Activated CD8-positive, alpha-beta T cell treated with anti-CD3 and anti-CD28 coated beads for 36 hours (primary cell): ENCODE measurements at regions of chr16 and their contacts with region 1.

Region 1: GRCh38 chr16:30956601-30957455 is 726 bp upstream of the SETD1A start:
- DNase-seq: peak; percentile 95
- ATAC-seq: peak; percentile 83
- H3K4me3 Mint-ChIP-seq: peak overlapping the region; percentile 89
- H3K27ac Mint-ChIP-seq: peak overlapping the region; percentile 99
- H3K4me1 Mint-ChIP-seq: peaks cover 37% of the 10 kb centered on the region
- H3K27me3 Mint-ChIP-seq: no peaks in the 10 kb centered on the region
- CTCF ChIP-seq: no peak

Region 2: GRCh38 chr16:30882429-30883310 is 74.2 kb before region 1 on chr16:
- CTCF ChIA-PET with region 1: no interaction called
- POLR2A ChIA-PET with region 1: no interaction called
- intact Hi-C with region 1: no loop called
- DNase-seq: no peak
- ATAC-seq: peak; percentile 54
- H3K4me3 Mint-ChIP-seq: no peak overlapping the region
- H3K27ac Mint-ChIP-seq: peak overlapping the region; percentile 86
- H3K4me1 Mint-ChIP-seq: peaks cover 32% of the 10 kb centered on the region
- H3K27me3 Mint-ChIP-seq: no peaks in the 10 kb centered on the region
- CTCF ChIP-seq: no peak

Region 3: DNA sequence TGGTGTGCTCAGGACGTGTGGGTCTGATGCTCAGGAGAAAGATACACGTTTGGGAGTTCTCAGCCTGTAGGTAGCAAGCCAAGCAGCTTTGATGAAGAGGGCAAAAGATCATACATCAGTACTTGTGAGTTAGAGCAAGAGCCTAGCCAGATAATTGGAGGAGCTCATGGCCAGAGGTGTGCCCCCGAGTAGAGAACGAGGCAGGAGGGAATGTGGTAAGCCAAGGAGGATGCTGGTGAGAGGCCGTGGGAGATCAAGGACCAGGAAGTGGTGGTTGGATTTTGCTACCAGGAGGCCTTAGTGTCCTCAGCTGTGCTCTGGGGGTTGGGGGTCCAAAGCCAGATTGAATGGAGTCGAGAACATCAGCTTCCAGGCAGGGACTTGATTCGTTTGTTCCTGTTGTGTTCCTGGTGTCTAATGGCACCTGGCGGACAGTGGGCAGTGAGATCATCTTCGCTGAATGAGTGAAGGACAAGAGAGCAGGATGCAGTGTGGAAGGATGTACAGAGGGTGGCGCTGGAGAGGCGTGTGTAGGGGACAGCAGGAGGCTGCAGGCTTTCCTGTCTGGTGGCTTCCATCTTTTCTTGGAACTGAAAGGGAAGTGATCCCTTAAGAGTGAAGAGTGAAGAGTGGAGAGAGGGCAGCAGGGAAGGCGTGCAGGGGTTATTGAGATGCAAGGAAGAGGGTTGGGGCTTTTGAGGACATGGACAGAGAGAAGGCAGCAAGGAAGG is 21.8 kb before region 1 on chr16:
- CTCF ChIA-PET with region 1: interaction called, 50 read pairs
- POLR2A ChIA-PET with region 1: no interaction called
- intact Hi-C with region 1: no loop called
- DNase-seq: peak; percentile 72
- ATAC-seq: peak; percentile 97
- H3K4me3 Mint-ChIP-seq: no peak overlapping the region
- H3K27ac Mint-ChIP-seq: peak overlapping the region; percentile 29
- H3K4me1 Mint-ChIP-seq: peaks cover 16% of the 10 kb centered on the region
- H3K27me3 Mint-ChIP-seq: no peaks in the 10 kb centered on the region
- CTCF ChIP-seq: peak; percentile 69

Region 4: DNA sequence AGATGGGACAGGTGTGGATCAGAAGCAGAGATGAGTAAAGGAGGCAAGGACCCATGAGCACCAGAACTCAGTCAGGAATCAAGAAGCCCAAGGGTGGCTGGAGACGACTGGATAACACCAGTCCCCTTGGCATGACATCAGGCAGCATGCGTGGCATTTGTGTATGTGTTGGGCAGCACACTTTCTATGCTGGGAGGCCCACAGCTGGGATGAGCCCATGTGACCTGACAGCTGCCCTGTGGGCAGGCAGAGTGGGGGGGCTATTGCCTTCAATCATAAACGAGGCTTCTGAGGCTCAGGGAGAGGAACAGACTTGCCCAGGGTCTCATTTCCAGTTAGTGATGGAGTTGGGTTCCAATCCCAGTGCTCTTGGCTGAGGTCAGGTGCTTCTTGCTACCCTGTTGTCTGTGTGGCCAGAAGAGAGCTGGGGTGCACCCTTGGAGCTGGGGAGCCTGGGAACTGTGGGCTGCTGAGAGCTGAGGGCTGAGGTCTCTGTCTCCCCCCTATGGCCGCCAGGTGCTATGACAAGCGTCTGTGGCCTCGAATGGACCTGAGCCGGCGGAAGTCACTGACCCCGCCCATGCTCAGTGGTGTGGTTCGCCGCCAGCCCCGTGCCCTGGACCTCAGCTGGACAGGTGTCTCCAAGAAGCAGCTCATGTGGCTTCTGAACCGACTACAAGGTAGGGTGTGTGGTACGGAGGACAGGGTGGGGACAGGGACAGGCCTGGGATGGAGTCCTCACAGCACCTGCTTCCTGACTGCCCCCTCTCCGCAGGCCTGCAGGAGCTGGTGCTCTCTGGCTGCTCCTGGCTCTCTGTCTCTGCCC is 15.0 kb before region 1 on chr16:
- CTCF ChIA-PET with region 1: interaction called, 50 read pairs
- POLR2A ChIA-PET with region 1: interaction called, 4 read pairs
- intact Hi-C with region 1: no loop called
- DNase-seq: peak; percentile 80
- ATAC-seq: peak; percentile 98
- H3K4me3 Mint-ChIP-seq: peak overlapping the region; percentile 33
- H3K27ac Mint-ChIP-seq: no peak overlapping the region
- H3K4me1 Mint-ChIP-seq: peaks cover 22% of the 10 kb centered on the region
- H3K27me3 Mint-ChIP-seq: no peaks in the 10 kb centered on the region
- CTCF ChIP-seq: peak; percentile 91

Region 5: DNA sequence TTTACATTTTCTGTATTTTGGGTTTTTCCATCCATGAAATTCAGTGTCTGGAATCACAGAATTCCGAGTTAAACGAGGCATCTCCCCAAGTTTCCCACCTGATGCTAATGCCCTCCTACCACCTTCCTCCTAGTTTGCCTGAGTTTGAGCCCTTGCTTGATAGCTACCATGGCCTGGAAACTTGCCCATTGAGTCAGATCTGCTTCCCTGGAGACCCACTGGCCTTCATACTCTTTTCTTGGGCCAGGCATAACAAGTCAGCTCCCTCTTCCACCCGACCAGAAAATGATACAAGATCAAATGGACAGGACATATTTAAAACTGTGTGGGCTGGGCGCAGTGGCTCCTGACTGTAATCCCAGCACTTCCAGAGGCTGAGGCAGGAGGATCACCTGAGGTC is 11.0 kb after region 1 on chr16:
- CTCF ChIA-PET with region 1: interaction called, 5 read pairs
- POLR2A ChIA-PET with region 1: interaction called, 10 read pairs
- intact Hi-C with region 1: no loop called
- DNase-seq: no peak
- ATAC-seq: no peak
- H3K4me3 Mint-ChIP-seq: no peak overlapping the region
- H3K27ac Mint-ChIP-seq: no peak overlapping the region
- H3K4me1 Mint-ChIP-seq: peaks cover 2% of the 10 kb centered on the region
- H3K27me3 Mint-ChIP-seq: no peaks in the 10 kb centered on the region
- CTCF ChIP-seq: no peak

Region 6: GRCh38 chr16:31157136-31157535 is 200.3 kb after region 1 on chr16:
- CTCF ChIA-PET with region 1: interaction called, 13 read pairs
- POLR2A ChIA-PET with region 1: no interaction called
- intact Hi-C with region 1: no loop called
- DNase-seq: no peak
- ATAC-seq: no peak
- H3K4me3 Mint-ChIP-seq: peak overlapping the region; percentile 40
- H3K27ac Mint-ChIP-seq: no peak overlapping the region
- H3K4me1 Mint-ChIP-seq: peaks cover 9% of the 10 kb centered on the region
- H3K27me3 Mint-ChIP-seq: peaks cover 2% of the 10 kb centered on the region
- CTCF ChIP-seq: no peak